Gastrocnemius medialis (tissue), 4 donors: ENCODE measurements at regions of chr17 and their contacts with region 1.

Region 1: DNA sequence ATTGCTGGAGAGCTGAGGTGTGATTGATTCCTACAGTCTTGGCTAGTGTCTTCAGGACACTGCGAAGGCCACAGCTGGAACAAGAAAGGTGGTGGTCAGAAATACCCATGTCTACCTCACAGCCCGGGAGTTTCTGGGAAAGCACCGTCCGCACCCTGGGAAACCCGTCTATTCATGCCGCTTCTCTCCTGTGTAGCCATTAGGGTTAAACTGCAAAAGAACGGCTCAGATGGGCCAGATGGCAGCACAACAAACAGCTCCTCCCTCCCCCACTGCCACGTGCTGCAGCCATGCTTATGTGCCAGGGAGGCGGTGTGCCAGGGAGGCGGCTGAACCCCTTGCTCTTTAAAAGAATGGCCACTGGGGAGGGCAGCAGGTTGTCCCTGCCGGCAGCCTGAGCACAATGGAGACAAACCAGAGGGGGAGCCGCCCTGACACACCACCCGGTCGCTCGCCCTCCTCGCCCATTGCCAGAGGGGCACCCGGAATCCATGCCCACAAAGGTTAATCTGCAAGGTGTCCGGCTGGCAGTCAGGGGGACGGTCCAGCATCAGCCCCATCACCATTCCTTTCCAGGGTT is 65.2 kb downstream of the CYTH1 start:
- DNase-seq: peak; percentile 81 to 90
- ATAC-seq: peak; percentile 86 to 91
- H3K4me3 ChIP-seq: peak overlapping the region; percentile 51 to 64 (median 59)
- H3K27ac ChIP-seq: peak overlapping the region; percentile 72 to 84 (median 83)
- H3K4me1 ChIP-seq: peaks cover 47 to 50% of the 10 kb centered on the region in 2 donors
- H3K27me3 ChIP-seq: no peaks in the 10 kb centered on the region
- CTCF ChIP-seq: peak in 3 of 5 experiments; percentile 3 to 40 (median 30)
- POLR2A ChIP-seq: no peak

Region 2: GRCh38 chr17:78598013-78598471 is 118.9 kb before region 1 on chr17:
- in situ Hi-C with region 1: no loop called
- intact Hi-C with region 1: no loop called
- DNase-seq: no peak
- ATAC-seq: no peak
- H3K4me3 ChIP-seq: no peak overlapping the region
- H3K27ac ChIP-seq: no peak overlapping the region
- H3K4me1 ChIP-seq: peaks cover 0 to 2% of the 10 kb centered on the region in 2 donors
- H3K27me3 ChIP-seq: peaks cover 0 to 6% (median 0%) of the 10 kb centered on the region in 3 donors
- CTCF ChIP-seq: no peak
- POLR2A ChIP-seq: no peak

Region 3: DNA sequence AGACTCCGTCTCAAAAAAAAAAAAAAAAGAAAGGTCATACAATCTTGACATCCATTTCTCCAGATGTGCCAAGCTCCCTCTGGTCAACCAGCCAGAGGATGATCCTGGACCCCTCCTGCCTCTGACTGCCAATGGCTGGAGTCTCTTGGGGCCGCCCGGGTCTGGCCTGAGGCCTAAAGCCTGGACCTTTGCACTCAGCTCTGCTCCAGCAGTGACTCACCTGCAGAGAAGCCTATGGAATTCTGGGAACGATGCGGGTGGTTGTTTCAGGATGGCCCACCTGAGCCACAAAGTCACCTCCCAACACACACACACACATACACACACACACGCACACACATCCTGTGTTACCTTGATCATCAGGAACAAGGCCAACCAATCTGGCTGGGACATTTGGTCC is 75.7 kb before region 1 on chr17:
- in situ Hi-C with region 1: no loop called
- intact Hi-C with region 1: no loop called
- DNase-seq: no peak
- ATAC-seq: no peak
- H3K4me3 ChIP-seq: no peak overlapping the region
- H3K27ac ChIP-seq: no peak overlapping the region
- H3K4me1 ChIP-seq: no peaks in the 10 kb centered on the region
- H3K27me3 ChIP-seq: no peaks in the 10 kb centered on the region
- CTCF ChIP-seq: no peak
- POLR2A ChIP-seq: no peak

Region 4: GRCh38 chr17:78781948-78782916 is 65.3 kb after region 1 on chr17 and contains the start of gene CYTH1:
- in situ Hi-C with region 1: no loop called
- intact Hi-C with region 1: no loop called
- DNase-seq: peak; percentile 94 to 97
- ATAC-seq: peak; percentile 69 to 82
- H3K4me3 ChIP-seq: peak within 1 kb of the TSS; percentile 61 to 98 (median 90)
- H3K27ac ChIP-seq: peak within 1 kb of the TSS; percentile 86 to 99 (median 98)
- H3K4me1 ChIP-seq: peaks cover 24 to 27% of the 10 kb centered on the region in 2 donors
- H3K27me3 ChIP-seq: no peaks in the 10 kb centered on the region
- CTCF ChIP-seq: no peak
- POLR2A ChIP-seq: peak; percentile 82 to 90
- total RNA-seq, gene CYTH1: 24.7 to 43.7 (median 32.4) TPM

Region 5: GRCh38 chr17:78798695-78799559 is 82.0 kb after region 1 on chr17:
- in situ Hi-C with region 1: no loop called
- intact Hi-C with region 1: loop called (anchors 5 kb)
- DNase-seq: no peak
- ATAC-seq: peak; percentile 46 to 72
- H3K4me3 ChIP-seq: no peak overlapping the region
- H3K27ac ChIP-seq: peak overlapping the region in 3 of 4 donors; percentile 17 to 39 (median 32)
- H3K4me1 ChIP-seq: peaks cover 28 to 32% of the 10 kb centered on the region in 2 donors
- H3K27me3 ChIP-seq: no peaks in the 10 kb centered on the region
- CTCF ChIP-seq: peak; percentile 41 to 67 (median 61)
- POLR2A ChIP-seq: no peak